Calu3 (cell line): ENCODE measurements at regions of chr4 and their contacts with region 1.

Region 1: GRCh38 chr4:36351082-36351666 is 69.8 kb downstream of the DTHD1 start:
- DNase-seq: peak; percentile 61
- H3K4me3 Mint-ChIP-seq: no peak overlapping the region
- H3K27ac Mint-ChIP-seq: no peak overlapping the region
- H3K4me1 Mint-ChIP-seq: peaks cover 25% of the 10 kb centered on the region
- H3K27me3 Mint-ChIP-seq: no peaks in the 10 kb centered on the region
- CTCF ChIP-seq: peak; percentile 63

Region 2: GRCh38 chr4:36399762-36400353 is 48.7 kb after region 1 on chr4:
- CTCF ChIA-PET with region 1: no interaction called
- intact Hi-C with region 1: loop called (anchors 1 kb)
- DNase-seq: peak; percentile 13
- H3K4me3 Mint-ChIP-seq: no peak overlapping the region
- H3K27ac Mint-ChIP-seq: no peak overlapping the region
- H3K4me1 Mint-ChIP-seq: no peaks in the 10 kb centered on the region
- H3K27me3 Mint-ChIP-seq: peaks cover 11% of the 10 kb centered on the region
- CTCF ChIP-seq: no peak